ENCODE measurements at regions of chr11 and their contacts with region 1.

Region 1: DNA sequence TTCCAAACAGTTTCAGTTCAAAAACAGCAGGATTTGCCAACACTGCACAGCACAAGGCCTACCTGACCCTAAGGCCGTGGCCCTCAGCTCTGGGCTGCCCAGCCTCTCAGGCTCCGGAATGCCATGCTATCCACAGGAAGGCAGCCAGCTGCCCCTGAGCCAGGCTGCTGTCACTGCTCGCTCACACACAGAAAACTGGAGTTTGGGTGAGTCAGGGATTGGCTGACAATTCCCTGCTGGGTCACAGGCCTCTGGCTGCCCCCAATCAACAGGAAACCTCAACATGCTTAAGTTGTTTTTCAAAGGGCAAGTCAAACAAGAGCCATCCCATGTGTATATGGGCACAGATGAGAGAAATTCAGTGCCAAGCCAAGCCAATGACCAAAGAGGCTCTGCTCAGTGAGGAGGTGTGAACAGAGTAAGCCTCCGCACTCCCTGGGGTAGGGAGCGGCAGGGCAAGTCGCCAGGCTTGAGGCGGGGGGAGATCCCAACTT is 50.2 kb downstream of the RPL27A start:
- DNase-seq: peak; percentile 84
- H3K4me3 ChIP-seq: no peak overlapping the region
- H3K27ac ChIP-seq: peak overlapping the region; percentile 14
- H3K4me1 ChIP-seq: peaks cover 19% of the 10 kb centered on the region
- H3K27me3 ChIP-seq: no peaks in the 10 kb centered on the region
- CTCF ChIP-seq: no peak
- POLR2A ChIP-seq: no peak

Region 2: GRCh38 chr11:8688414-8689362 is 44.1 kb before region 1 on chr11:
- CTCF ChIA-PET with region 1: no interaction called
- POLR2A ChIA-PET with region 1: no interaction called
- dilution Hi-C with region 1: no loop called
- intact Hi-C with region 1: loop called (anchors 1 kb)
- DNase-seq: peak; percentile 93
- H3K4me3 ChIP-seq: peak overlapping the region; percentile 45 to 86 (median 53)
- H3K27ac ChIP-seq: peak overlapping the region; percentile 65
- H3K4me1 ChIP-seq: peaks cover 46% of the 10 kb centered on the region
- H3K27me3 ChIP-seq: no peaks in the 10 kb centered on the region
- CTCF ChIP-seq: no peak
- POLR2A ChIP-seq: peak; percentile 99

Region 3: GRCh38 chr11:8699903-8700302 is 32.9 kb before region 1 on chr11:
- CTCF ChIA-PET with region 1: no interaction called
- POLR2A ChIA-PET with region 1: no interaction called
- dilution Hi-C with region 1: no loop called
- intact Hi-C with region 1: loop called (anchors 1 kb)
- DNase-seq: peak; percentile 34
- H3K4me3 ChIP-seq: no peak overlapping the region
- H3K27ac ChIP-seq: peak overlapping the region; percentile 19
- H3K4me1 ChIP-seq: peaks cover 11% of the 10 kb centered on the region
- H3K27me3 ChIP-seq: no peaks in the 10 kb centered on the region
- CTCF ChIP-seq: no peak
- POLR2A ChIP-seq: no peak

Region 4: DNA sequence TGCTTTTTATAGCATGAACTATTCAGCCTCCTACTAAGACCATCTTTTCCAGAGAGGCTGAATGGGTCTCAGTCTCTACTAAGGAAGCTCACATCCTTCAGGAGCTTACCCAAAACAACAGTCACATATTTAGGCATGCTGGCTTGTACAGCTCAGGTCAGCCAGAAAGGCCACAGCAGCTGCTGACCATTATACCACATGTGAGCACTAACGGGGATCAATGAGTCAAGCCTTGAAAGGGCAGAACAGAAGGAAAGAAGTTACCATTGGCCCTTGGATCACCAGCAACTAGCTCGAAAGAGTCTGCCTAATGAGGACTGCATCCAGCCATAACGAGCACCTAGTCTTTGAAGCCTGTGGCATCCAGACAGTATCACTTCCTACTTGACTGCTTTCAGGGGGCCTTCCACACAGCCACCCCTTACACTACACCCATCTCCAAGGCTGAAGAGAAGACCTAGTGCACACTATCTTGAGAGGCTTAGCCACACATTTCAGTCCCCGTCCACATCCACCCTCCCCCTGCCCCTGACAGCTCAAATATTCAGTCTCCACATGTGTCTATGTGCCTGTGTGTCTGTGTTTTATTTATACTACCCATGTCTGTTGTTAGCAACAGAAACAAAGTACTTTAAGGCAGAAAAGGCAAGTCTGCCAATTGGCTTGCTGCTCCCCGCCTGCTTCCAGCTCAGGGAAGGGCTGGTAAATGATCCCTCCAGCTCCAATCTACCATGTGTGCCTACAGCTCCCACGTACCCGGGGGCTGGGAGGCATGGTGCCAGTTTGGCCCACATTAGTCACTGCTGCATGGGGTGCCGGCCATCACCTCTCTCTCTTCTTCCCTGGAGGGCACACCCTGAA is 45.3 kb after region 1 on chr11:
- CTCF ChIA-PET with region 1: no interaction called
- POLR2A ChIA-PET with region 1: no interaction called
- dilution Hi-C with region 1: no loop called
- intact Hi-C with region 1: no loop called
- DNase-seq: no peak
- H3K4me3 ChIP-seq: no peak overlapping the region
- H3K27ac ChIP-seq: no peak overlapping the region
- H3K4me1 ChIP-seq: no peaks in the 10 kb centered on the region
- H3K27me3 ChIP-seq: no peaks in the 10 kb centered on the region
- CTCF ChIP-seq: no peak
- POLR2A ChIP-seq: no peak